Activated naive CD4-positive, alpha-beta T cell treated with anti-CD3 and anti-CD28 coated beads, Interleukin-2, amount 10 ng/mL, durations not matched to agents 7 days and 5 days (primary cell): ENCODE measurements at regions of chr1 and their contacts with region 1.

Region 1: DNA sequence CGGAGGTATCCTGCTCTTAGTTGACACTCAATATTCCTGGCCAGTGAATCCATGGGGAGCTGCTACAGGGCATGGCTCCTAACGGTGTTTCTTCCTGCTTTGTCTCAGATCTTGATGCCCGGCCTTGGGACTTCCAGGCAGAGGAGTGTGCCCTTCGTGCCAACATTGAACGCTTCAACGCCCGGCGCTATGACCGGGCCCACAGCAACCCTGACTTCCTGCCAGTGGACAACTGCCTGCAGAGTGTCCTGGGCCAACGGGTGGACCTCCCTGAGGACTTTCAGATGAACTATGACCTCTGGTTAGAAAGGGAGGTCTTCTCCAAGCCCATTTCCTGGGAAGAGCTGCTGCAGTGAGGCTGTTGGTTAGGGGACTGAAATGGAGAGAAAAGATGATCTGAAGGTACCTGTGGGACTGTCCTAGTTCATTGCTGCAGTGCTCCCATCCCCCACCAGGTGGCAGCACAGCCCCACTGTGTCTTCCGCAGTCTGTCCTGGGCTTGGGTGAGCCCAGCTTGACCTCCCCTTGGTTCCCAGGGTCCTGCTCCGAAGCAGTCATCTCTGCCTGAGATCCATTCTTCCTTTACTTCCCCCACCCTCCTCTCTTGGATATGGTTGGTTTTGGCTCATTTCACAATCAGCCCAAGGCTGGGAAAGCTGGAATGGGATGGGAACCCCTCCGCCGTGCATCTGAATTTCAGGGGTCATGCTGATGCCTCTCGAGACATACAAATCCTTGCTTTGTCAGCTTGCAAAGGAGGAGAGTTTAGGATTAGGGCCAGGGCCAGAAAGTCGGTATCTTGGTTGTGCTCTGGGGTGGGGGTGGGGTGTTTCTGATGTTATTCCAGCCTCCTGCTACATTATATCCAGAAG is 16.7 kb downstream of the ALX3 start:
- DNase-seq: peak; percentile 79
- H3K4me3 Mint-ChIP-seq: no peak overlapping the region
- H3K27ac Mint-ChIP-seq: no peak overlapping the region
- H3K4me1 Mint-ChIP-seq: no peaks in the 10 kb centered on the region
- H3K27me3 Mint-ChIP-seq: no peaks in the 10 kb centered on the region

Region 2: GRCh38 chr1:109947582-109948286 is 106.1 kb before region 1 on chr1:
- CTCF ChIA-PET with region 1: no interaction called
- DNase-seq: no peak
- H3K4me3 Mint-ChIP-seq: no peak overlapping the region
- H3K27ac Mint-ChIP-seq: no peak overlapping the region
- H3K4me1 Mint-ChIP-seq: peaks cover 4% of the 10 kb centered on the region
- H3K27me3 Mint-ChIP-seq: peaks cover 12% of the 10 kb centered on the region

Region 3: DNA sequence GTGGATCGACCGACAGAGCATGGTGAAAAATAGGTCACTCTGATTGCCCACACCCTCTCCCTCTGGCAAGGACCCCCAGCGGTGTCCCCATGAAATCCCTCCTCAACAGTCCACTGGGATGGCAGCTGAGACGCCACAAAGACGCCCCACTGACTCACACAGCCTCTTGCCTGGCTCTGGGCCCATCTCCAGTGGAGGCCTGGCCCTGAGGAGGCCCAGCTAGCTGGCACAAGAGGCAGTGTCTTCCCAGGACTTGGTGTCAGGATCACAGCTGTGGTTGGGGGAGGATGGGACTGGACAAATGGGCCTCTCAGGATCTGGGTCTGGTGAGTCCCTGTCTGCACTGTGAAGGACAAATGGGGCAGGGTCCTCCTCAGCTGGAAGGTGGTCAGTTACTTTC is 12.0 kb after region 1 on chr1:
- CTCF ChIA-PET with region 1: interaction called, 14 read pairs
- DNase-seq: no peak
- H3K4me3 Mint-ChIP-seq: no peak overlapping the region
- H3K27ac Mint-ChIP-seq: no peak overlapping the region
- H3K4me1 Mint-ChIP-seq: peaks cover 5% of the 10 kb centered on the region
- H3K27me3 Mint-ChIP-seq: peaks cover 69% of the 10 kb centered on the region

Region 4: GRCh38 chr1:110106013-110106941 is 52.5 kb after region 1 on chr1:
- CTCF ChIA-PET with region 1: interaction called, 57 read pairs
- DNase-seq: peak; percentile 73
- H3K4me3 Mint-ChIP-seq: no peak overlapping the region
- H3K27ac Mint-ChIP-seq: no peak overlapping the region
- H3K4me1 Mint-ChIP-seq: no peaks in the 10 kb centered on the region
- H3K27me3 Mint-ChIP-seq: peaks cover 39% of the 10 kb centered on the region

Region 5: GRCh38 chr1:110118636-110119615 is 65.1 kb after region 1 on chr1:
- CTCF ChIA-PET with region 1: interaction called, 16 read pairs
- DNase-seq: no peak
- H3K4me3 Mint-ChIP-seq: no peak overlapping the region
- H3K27ac Mint-ChIP-seq: no peak overlapping the region
- H3K4me1 Mint-ChIP-seq: no peaks in the 10 kb centered on the region
- H3K27me3 Mint-ChIP-seq: peaks cover 50% of the 10 kb centered on the region